ENCODE measurements at regions of chr15 and their contacts with region 1.

Region 1: GRCh38 chr15:73972984-73973682 is 19.0 kb downstream of the STOML1 start:
- DNase-seq: peak; percentile 86
- ATAC-seq: peak; percentile 81
- H3K4me3 ChIP-seq: peak overlapping the region in 4 of 5 experiments; percentile 6 to 55 (median 26)
- H3K4me3 Mint-ChIP-seq: peak overlapping the region; percentile 42
- H3K27ac ChIP-seq: no peak overlapping the region
- H3K27ac Mint-ChIP-seq: no peak overlapping the region
- H3K4me1 ChIP-seq: peaks cover 16 to 17% of the 10 kb centered on the region in 2 donors
- H3K4me1 Mint-ChIP-seq: peaks cover 20% of the 10 kb centered on the region
- H3K27me3 ChIP-seq: peaks cover 0 to 20% (median 13%) of the 10 kb centered on the region in 4 experiments
- H3K27me3 Mint-ChIP-seq: peaks cover 23% of the 10 kb centered on the region
- CTCF ChIP-seq: peak; percentile 82

Region 2: DNA sequence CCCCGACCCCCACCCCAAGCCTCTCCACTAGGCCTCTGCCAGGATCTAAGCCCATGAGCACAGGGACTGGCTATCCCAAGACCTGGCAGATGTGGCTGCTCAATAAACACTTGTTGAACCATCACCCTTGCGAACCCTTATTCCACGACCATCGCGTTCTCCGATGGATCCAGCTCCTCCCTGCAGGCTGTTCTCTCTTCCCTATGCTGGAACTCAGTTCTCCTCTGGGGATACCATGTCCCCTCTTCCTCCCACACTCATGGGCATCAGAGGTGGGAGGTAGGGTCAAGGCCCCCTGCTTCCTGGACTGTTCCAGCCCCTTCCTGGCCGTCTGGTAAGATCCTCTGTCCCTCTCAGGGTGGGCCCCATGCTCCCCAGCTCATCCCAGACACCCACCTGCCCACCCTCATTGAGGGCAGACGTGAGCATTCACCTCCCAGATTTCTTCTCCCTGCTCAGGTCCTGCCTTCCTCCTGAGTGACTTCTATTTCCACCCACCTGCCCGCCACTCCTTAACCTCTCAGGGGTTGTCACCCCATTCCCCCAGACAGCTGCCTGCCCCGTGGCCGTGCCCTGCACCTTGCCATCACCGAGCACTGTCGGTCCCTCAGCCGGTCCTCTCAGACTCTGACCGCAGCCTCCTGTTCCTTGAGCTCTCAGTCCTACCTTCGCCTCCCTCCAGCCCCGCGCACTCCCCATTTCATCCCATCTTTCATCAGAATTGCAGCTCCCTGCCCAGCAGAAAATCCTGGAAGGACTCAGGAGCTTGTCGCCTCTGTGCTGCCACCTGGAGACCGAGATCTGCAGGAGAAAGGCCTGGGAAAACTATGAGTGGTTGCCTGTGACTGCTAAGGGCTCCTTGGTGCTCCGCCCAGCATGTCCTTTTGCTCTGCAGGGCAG is 63.4 kb after region 1 on chr15:
- CTCF ChIA-PET with region 1: interaction called, 30 read pairs
- POLR2A ChIA-PET with region 1: interaction called, 3 read pairs
- intact Hi-C with region 1: loop called (anchors 5 kb)
- DNase-seq: no peak
- ATAC-seq: no peak
- H3K4me3 ChIP-seq: no peak overlapping the region
- H3K4me3 Mint-ChIP-seq: no peak overlapping the region
- H3K27ac ChIP-seq: no peak overlapping the region
- H3K27ac Mint-ChIP-seq: no peak overlapping the region
- H3K4me1 ChIP-seq: no peaks in the 10 kb centered on the region
- H3K4me1 Mint-ChIP-seq: no peaks in the 10 kb centered on the region
- H3K27me3 ChIP-seq: no peaks in the 10 kb centered on the region
- H3K27me3 Mint-ChIP-seq: no peaks in the 10 kb centered on the region
- CTCF ChIP-seq: no peak

Region 3: GRCh38 chr15:74053941-74054529 is 80.9 kb after region 1 on chr15:
- CTCF ChIA-PET with region 1: interaction called, 43 read pairs
- POLR2A ChIA-PET with region 1: no interaction called
- intact Hi-C with region 1: no loop called
- DNase-seq: peak; percentile 75
- ATAC-seq: peak; percentile 98
- H3K4me3 ChIP-seq: no peak overlapping the region
- H3K4me3 Mint-ChIP-seq: peak overlapping the region; percentile 59
- H3K27ac ChIP-seq: no peak overlapping the region
- H3K27ac Mint-ChIP-seq: no peak overlapping the region
- H3K4me1 ChIP-seq: peaks cover 6 to 7% of the 10 kb centered on the region in 2 donors
- H3K4me1 Mint-ChIP-seq: peaks cover 9% of the 10 kb centered on the region
- H3K27me3 ChIP-seq: no peaks in the 10 kb centered on the region
- H3K27me3 Mint-ChIP-seq: no peaks in the 10 kb centered on the region
- CTCF ChIP-seq: peak; percentile 37

Region 4: GRCh38 chr15:74156678-74157411 is 183.7 kb after region 1 on chr15:
- CTCF ChIA-PET with region 1: no interaction called
- POLR2A ChIA-PET with region 1: no interaction called
- intact Hi-C with region 1: no loop called
- DNase-seq: no peak
- ATAC-seq: no peak
- H3K4me3 ChIP-seq: no peak overlapping the region
- H3K4me3 Mint-ChIP-seq: no peak overlapping the region
- H3K27ac ChIP-seq: no peak overlapping the region
- H3K27ac Mint-ChIP-seq: no peak overlapping the region
- H3K4me1 ChIP-seq: peaks cover 0 to 5% of the 10 kb centered on the region in 2 donors
- H3K4me1 Mint-ChIP-seq: peaks cover 10% of the 10 kb centered on the region
- H3K27me3 ChIP-seq: peaks cover 0 to 3% (median 1%) of the 10 kb centered on the region in 4 experiments
- H3K27me3 Mint-ChIP-seq: peaks cover 30% of the 10 kb centered on the region
- CTCF ChIP-seq: no peak

Region 5: GRCh38 chr15:74275957-74276356 is 302.8 kb after region 1 on chr15:
- CTCF ChIA-PET with region 1: no interaction called
- POLR2A ChIA-PET with region 1: no interaction called
- intact Hi-C with region 1: no loop called
- DNase-seq: no peak
- ATAC-seq: no peak
- H3K4me3 ChIP-seq: no peak overlapping the region
- H3K4me3 Mint-ChIP-seq: no peak overlapping the region
- H3K27ac ChIP-seq: no peak overlapping the region
- H3K27ac Mint-ChIP-seq: no peak overlapping the region
- H3K4me1 ChIP-seq: no peaks in the 10 kb centered on the region
- H3K4me1 Mint-ChIP-seq: no peaks in the 10 kb centered on the region
- H3K27me3 ChIP-seq: peaks cover 0 to 27% (median 0%) of the 10 kb centered on the region in 4 experiments
- H3K27me3 Mint-ChIP-seq: peaks cover 33% of the 10 kb centered on the region
- CTCF ChIP-seq: no peak

Region 6: DNA sequence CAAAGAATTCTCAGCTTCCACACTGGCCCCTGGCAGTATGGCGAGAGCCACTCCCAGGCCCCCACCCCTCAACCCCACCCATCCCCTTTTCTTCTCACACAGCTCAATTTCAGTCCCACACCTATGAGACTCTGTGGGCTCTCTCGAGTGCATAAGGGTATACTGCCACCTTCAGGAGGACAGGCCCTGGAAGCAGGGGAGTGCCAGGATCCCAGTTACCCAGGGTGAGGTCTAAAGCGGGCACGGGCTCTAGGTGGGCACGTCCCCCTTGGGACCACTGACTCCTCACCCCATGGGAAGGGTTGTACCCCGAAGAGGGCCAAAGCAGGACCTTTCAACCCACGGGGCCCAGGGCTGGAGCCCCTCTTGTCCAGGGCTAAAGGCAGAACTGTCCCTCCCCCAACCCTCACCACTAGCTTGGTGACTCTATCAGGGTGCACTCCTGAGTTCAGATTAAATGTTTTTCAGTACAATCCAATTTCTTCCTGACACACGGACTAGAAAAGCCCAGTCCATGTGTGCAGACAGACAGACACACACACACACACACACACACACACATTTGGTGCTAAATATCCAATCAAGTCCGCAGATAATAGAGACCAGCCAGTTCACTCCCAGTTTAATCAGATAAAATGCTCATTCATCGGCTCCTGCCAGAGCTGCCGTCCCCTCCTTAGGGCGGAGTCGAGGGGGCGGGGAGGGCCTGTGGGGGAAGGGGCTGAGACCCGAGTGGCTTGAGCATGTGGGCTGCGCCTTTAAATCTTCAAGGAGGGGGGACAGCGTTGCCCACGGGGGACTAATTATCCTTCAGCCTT is 334.9 kb after region 1 on chr15:
- CTCF ChIA-PET with region 1: interaction called, 10 read pairs
- POLR2A ChIA-PET with region 1: no interaction called
- intact Hi-C with region 1: no loop called
- DNase-seq: peak; percentile 49
- ATAC-seq: peak; percentile 47
- H3K4me3 ChIP-seq: no peak overlapping the region
- H3K4me3 Mint-ChIP-seq: no peak overlapping the region
- H3K27ac ChIP-seq: no peak overlapping the region
- H3K27ac Mint-ChIP-seq: no peak overlapping the region
- H3K4me1 ChIP-seq: no peaks in the 10 kb centered on the region
- H3K4me1 Mint-ChIP-seq: no peaks in the 10 kb centered on the region
- H3K27me3 ChIP-seq: peaks cover 0 to 25% (median 5%) of the 10 kb centered on the region in 4 experiments
- H3K27me3 Mint-ChIP-seq: peaks cover 54% of the 10 kb centered on the region
- CTCF ChIP-seq: peak; percentile 48

Measured in B cell (primary cell).